Activated CD8-positive, alpha-beta T cell treated with anti-CD3 and anti-CD28 coated beads, Interleukin-2, amount 10 ng/mL, durations not matched to agents 7 days and 5 days (primary cell): ENCODE measurements at regions of chr2 and their contacts with region 1.

Region 1: DNA sequence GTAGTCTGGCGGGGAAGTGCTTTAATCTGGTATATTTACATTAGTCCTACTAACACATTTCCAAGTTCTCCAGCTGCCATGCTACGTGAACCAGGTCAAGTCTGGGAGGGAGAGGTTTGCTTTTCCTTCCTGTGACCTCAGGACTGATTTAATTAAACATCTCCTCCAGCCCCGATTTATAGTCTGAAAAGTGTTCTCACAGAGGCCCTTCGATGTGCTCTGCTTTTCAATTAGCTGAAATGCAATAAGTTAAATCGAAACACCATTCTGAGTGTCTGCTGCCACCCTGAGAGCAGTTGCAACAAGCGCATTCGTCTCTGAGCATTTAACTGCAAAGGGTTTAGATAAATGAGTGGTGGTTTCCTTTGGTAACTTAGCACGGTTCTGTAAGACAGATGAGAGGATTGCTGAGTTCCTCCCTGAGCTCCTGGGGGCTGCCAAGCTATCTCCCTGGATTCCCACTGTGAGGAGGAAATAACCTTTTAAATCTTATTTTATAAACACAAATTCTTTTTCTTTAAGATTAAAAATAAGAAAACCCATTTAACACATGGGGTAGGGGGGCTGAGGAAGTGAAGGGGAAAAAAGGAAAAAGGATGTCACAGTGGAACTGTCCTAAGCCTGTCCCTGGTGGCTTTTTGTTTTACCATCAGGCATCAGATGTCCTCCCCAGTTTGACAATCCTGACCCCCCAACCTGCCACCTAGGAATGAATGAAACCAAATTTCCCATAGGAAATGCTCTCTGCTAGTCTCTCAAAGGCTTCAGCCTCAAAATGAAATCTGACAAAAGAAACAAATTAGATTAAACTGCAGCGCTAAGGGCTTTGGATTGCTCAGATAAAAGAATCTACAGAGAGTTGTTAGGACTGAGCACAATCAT is 56.5 kb upstream of the CREB1 start:
- DNase-seq: peak; percentile 67
- ATAC-seq: peak; percentile 72
- H3K4me3 Mint-ChIP-seq: no peak overlapping the region
- H3K27ac Mint-ChIP-seq: no peak overlapping the region
- H3K4me1 Mint-ChIP-seq: peaks cover 22% of the 10 kb centered on the region
- H3K27me3 Mint-ChIP-seq: peaks cover 2% of the 10 kb centered on the region

Region 2: DNA sequence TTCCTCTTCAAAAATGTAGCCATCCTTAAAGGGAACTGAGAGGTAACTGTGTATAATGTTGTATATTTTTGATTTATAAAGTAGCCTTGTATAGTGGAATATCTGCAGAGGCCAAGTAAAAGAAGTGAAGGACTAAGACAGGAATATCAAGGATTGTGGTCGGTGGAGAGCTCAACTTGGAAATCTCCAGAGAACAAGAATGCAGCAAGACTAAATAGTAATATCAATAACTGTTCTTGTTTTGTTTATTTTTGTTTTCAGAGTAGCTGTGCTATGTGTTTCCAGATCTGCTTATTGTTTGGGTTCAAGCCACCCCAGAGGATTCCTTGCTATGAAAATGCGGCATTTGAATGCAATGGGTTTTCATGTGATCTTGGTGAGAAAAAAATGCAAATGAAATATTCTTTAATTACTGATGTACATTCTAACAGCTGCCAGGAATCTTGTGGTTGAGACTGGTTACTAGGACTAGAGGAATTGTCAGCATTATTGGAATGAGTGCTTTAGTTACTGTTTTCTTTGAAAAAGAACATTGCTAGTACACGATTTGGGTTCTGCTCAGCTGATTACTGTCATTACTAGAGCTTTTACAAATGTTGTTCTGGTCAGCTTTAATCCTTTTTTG is 682.9 kb before region 1 on chr2:
- CTCF ChIA-PET with region 1: interaction called, 18 read pairs
- POLR2A ChIA-PET with region 1: no interaction called
- DNase-seq: no peak
- ATAC-seq: no peak
- H3K4me3 Mint-ChIP-seq: no peak overlapping the region
- H3K27ac Mint-ChIP-seq: no peak overlapping the region
- H3K4me1 Mint-ChIP-seq: no peaks in the 10 kb centered on the region
- H3K27me3 Mint-ChIP-seq: no peaks in the 10 kb centered on the region

Region 3: DNA sequence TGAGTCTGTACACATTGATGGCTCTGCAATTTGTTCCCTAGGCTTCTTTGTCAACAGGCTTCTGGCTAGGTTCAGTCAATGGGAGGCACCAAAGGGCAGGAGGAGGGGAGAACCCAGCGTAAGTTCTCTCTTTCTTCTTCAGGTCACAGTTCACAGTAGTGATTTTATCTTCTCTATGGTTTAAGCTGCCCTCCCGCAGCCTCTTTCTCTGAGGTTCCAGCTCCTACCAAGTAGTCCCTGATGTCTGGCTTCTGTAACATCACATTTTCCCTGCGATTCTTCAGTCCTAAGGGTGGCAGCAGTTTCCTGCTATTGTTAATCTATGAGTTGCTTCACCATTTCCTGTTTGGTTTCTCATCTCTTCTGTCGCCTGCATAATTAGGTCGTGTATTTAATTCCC is 426.6 kb before region 1 on chr2:
- CTCF ChIA-PET with region 1: interaction called, 27 read pairs
- POLR2A ChIA-PET with region 1: no interaction called
- DNase-seq: peak; percentile 48
- ATAC-seq: peak; percentile 96
- H3K4me3 Mint-ChIP-seq: no peak overlapping the region
- H3K27ac Mint-ChIP-seq: peak overlapping the region; percentile 39
- H3K4me1 Mint-ChIP-seq: peaks cover 13% of the 10 kb centered on the region
- H3K27me3 Mint-ChIP-seq: peaks cover 8% of the 10 kb centered on the region